ENCODE measurements at regions of chr2 and their contacts with region 1.

Region 1: DNA sequence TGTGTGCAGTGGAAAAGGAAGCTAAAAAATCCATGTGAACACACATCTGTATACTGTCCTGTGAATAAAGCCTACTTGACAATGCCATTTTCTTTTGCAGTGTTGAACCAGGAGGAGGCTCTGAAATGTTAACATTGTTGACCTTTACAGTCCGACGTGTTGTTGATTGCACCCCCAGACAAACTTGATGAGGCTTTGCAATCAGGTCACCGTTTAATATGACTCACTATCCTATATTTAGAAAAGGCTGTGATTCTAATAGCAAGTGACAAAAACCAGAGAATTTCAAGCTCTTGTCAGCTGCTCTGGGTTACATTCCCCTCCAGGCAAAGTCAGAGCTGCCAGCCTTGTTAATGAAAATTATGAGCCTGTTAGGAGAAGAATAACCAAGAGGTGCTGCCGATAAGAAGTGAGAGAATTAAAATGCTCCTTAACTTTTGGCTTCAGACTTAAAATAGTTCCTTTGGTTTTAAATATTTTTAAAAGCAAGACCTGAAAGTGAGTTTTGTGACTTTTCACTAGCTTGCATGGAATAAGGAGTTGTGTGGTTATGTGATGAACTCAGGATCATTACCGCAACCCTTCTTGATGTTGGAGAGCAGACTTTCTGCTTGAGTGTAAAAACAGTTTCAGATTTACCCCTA is 162.1 kb downstream of the QPCT start:
- DNase-seq: peak; percentile 64
- H3K4me3 ChIP-seq: no peak overlapping the region
- H3K27ac ChIP-seq: peak overlapping the region; percentile 60 to 83 (median 78)
- H3K4me1 ChIP-seq: peaks cover 0 to 31% (median 24%) of the 10 kb centered on the region in 4 donors
- H3K27me3 ChIP-seq: no peaks in the 10 kb centered on the region
- CTCF ChIP-seq: peak in 1 of 4 experiments; percentile 9
- EP300 ChIP-seq: peak; percentile 67 to 85 (median 78)
- POLR2A ChIP-seq: no peak

Region 2: DNA sequence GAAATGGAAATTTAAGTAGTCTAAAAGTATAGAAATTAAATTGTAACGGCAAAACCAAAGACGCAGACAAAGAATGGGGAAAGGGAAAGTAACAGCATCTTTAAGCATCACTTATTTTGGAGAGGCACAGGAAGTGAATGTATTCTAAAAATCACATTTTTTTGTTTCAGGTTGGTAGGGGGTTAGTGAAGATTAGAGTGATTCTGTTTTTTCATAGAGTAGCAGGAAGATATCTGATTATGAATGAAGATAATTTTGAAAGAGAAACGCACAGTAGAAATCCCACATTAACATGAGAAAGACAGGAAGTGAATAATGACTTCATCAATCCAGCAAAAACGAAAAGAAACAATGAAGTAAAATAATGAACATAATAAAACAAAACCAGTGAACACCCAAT is 671.4 kb before region 1 on chr2:
- intact Hi-C with region 1: no loop called
- DNase-seq: no peak
- H3K4me3 ChIP-seq: no peak overlapping the region
- H3K27ac ChIP-seq: no peak overlapping the region
- H3K4me1 ChIP-seq: no peaks in the 10 kb centered on the region
- H3K27me3 ChIP-seq: no peaks in the 10 kb centered on the region
- CTCF ChIP-seq: no peak
- EP300 ChIP-seq: no peak
- POLR2A ChIP-seq: no peak

Region 3: DNA sequence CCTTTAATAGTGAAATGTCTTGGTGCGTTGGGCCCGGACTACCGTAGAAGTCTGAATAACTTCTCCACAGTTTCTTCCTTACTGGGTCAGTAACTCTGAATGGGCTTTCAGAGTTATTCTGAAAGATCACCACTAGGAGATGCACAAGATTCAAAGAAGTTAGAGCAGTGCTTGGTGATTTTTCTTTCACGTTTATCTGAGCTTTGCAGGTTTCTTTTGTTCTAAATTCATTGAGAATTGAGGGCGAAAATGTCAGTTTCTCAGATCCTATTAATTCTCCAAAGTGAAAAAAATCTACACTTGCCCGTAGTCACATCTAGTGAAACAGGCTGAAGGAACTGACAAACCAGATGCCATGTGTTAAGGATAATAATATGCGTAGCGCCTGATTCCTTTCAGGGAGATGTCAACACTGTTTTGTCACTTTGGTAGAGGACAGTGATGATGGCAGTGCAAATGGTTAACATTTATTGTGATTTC is 92.0 kb before region 1 on chr2:
- intact Hi-C with region 1: loop called (anchors 10 kb)
- DNase-seq: peak; percentile 74
- H3K4me3 ChIP-seq: no peak overlapping the region
- H3K27ac ChIP-seq: peak overlapping the region; percentile 48 to 76 (median 62)
- H3K4me1 ChIP-seq: peaks cover 0 to 28% (median 22%) of the 10 kb centered on the region in 4 donors
- H3K27me3 ChIP-seq: no peaks in the 10 kb centered on the region
- CTCF ChIP-seq: peak; percentile 80 to 98 (median 96)
- EP300 ChIP-seq: no peak
- POLR2A ChIP-seq: no peak